WTC11 (cell line): ENCODE measurements at regions of chr15 and their contacts with region 1.

Region 1: DNA sequence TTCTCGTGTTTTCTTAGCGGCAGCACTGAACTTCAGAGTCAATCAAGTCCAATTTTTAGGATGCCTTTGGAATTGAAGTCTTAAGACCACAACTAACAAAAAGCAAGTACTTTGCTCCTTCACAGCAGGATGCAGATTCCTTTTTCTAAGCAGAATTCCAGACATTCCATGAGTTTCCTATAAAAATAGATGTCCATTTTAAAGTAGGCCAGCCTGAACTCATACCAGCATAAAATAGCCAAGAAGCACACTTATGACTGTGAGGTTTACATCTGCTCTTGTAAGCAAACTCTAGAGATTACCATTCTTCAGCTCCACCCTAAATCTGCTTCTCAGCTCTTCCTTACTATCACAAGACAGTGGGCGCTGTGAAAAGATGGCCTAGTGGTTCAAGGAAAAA is 85.8 kb downstream of the THBS1 start:
- DNase-seq: no peak
- ATAC-seq: peak; percentile 35
- H3K4me3 Mint-ChIP-seq: no peak overlapping the region
- H3K27ac Mint-ChIP-seq: peak overlapping the region; percentile 85; the same call in 1 of the 2 replicates
- H3K4me1 Mint-ChIP-seq: peaks cover 49% of the 10 kb centered on the region
- H3K27me3 Mint-ChIP-seq: no peaks in the 10 kb centered on the region
- CTCF ChIP-seq: no peak

Region 2: GRCh38 chr15:39642011-39642640 is 24.6 kb before region 1 on chr15:
- CTCF ChIA-PET with region 1: interaction called, 10 read pairs
- POLR2A ChIA-PET with region 1: no interaction called
- DNase-seq: no peak
- ATAC-seq: peak; percentile 82
- H3K4me3 Mint-ChIP-seq: no peak overlapping the region
- H3K27ac Mint-ChIP-seq: no peak overlapping the region
- H3K4me1 Mint-ChIP-seq: peaks cover 8% of the 10 kb centered on the region
- H3K27me3 Mint-ChIP-seq: no peaks in the 10 kb centered on the region
- CTCF ChIP-seq: no peak